ENCODE measurements at regions of chr20 and their contacts with region 1.

Region 1: GRCh38 chr20:33666293-33667244 is at the start of gene ACTL10:
- DNase-seq: peak; percentile 65 to 85 (median 66)
- H3K4me3 ChIP-seq: peak within 1 kb of the TSS; percentile 47 to 52
- H3K4me3 Mint-ChIP-seq: peak within 1 kb of the TSS; percentile 95 to 98 (median 97)
- H3K27ac ChIP-seq: peak within 1 kb of the TSS; percentile 60
- H3K27ac Mint-ChIP-seq: peak within 1 kb of the TSS; percentile 95 to 99 (median 97)
- H3K4me1 ChIP-seq: peaks cover 41% of the 10 kb centered on the region
- H3K4me1 Mint-ChIP-seq: peaks cover 20 to 71% (median 36%) of the 10 kb centered on the region in 4 donors
- H3K27me3 ChIP-seq: no peaks in the 10 kb centered on the region
- H3K27me3 Mint-ChIP-seq: no peaks in the 10 kb centered on the region
- total RNA-seq, gene ACTL10: 5.5 to 6.0 TPM

Region 2: GRCh38 chr20:33450867-33451266 is 215.7 kb before region 1 on chr20:
- CTCF ChIA-PET with region 1: interaction called, 54 read pairs
- POLR2A ChIA-PET with region 1: interaction called, 22 read pairs
- intact Hi-C with region 1: no loop called
- DNase-seq: no peak
- H3K4me3 ChIP-seq: no peak overlapping the region
- H3K4me3 Mint-ChIP-seq: no peak overlapping the region
- H3K27ac ChIP-seq: no peak overlapping the region
- H3K27ac Mint-ChIP-seq: no peak overlapping the region
- H3K4me1 ChIP-seq: no peaks in the 10 kb centered on the region
- H3K4me1 Mint-ChIP-seq: peaks cover 0 to 5% (median 2%) of the 10 kb centered on the region in 4 donors
- H3K27me3 ChIP-seq: no peaks in the 10 kb centered on the region
- H3K27me3 Mint-ChIP-seq: no peaks in the 10 kb centered on the region

Region 3: GRCh38 chr20:33554914-33555420 is 111.6 kb before region 1 on chr20:
- CTCF ChIA-PET with region 1: interaction called, 7 read pairs
- POLR2A ChIA-PET with region 1: interaction called, 11 read pairs
- intact Hi-C with region 1: loop called (anchors 2 kb)
- DNase-seq: peak; percentile 77 to 94 (median 91)
- H3K4me3 ChIP-seq: no peak overlapping the region
- H3K4me3 Mint-ChIP-seq: peak overlapping the region; percentile 57 to 82 (median 71)
- H3K27ac ChIP-seq: peak overlapping the region; percentile 76
- H3K27ac Mint-ChIP-seq: peak overlapping the region; percentile 91 to 99 (median 97)
- H3K4me1 ChIP-seq: peaks cover 20% of the 10 kb centered on the region
- H3K4me1 Mint-ChIP-seq: peaks cover 14 to 41% (median 24%) of the 10 kb centered on the region in 4 donors
- H3K27me3 ChIP-seq: no peaks in the 10 kb centered on the region
- H3K27me3 Mint-ChIP-seq: no peaks in the 10 kb centered on the region

Region 4: GRCh38 chr20:33679758-33680485 is 13.4 kb after region 1 on chr20:
- CTCF ChIA-PET with region 1: interaction called, 88 read pairs
- POLR2A ChIA-PET with region 1: interaction called, 122 read pairs
- intact Hi-C with region 1: no loop called
- DNase-seq: peak; percentile 22 to 73 (median 36)
- H3K4me3 ChIP-seq: no peak overlapping the region
- H3K4me3 Mint-ChIP-seq: peak overlapping the region in 7 of 8 donors; percentile 3 to 79 (median 71)
- H3K27ac ChIP-seq: no peak overlapping the region
- H3K27ac Mint-ChIP-seq: peak overlapping the region; percentile 58 to 93 (median 90)
- H3K4me1 ChIP-seq: peaks cover 47% of the 10 kb centered on the region
- H3K4me1 Mint-ChIP-seq: peaks cover 24 to 61% (median 43%) of the 10 kb centered on the region in 4 donors
- H3K27me3 ChIP-seq: no peaks in the 10 kb centered on the region
- H3K27me3 Mint-ChIP-seq: no peaks in the 10 kb centered on the region

Region 5: DNA sequence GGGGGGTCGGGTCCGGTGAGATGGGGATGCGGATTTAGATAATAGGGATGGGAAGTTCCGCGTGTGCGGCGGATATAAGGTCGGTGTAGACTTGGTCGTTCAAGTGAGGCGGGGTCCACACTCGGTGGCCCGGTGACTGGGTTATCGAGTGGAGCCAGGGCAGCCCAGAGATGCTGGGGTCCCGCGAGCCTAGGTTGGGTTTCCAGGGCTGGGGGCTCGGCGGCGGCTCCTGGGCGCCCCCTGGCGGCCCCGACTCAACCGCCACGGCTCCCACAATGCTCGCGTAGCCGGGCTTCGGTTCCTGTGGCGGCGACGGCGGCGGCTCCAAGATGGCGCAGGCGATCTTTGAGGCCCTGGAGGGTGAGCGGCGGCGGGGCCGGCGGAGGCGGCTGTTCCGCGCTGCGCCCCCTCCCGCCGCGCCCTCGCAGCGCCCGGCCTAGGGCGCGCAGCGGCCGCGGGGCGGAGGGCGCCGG is 65.2 kb after region 1 on chr20 and contains the start of gene ZNF341:
- CTCF ChIA-PET with region 1: interaction called, 3 read pairs
- POLR2A ChIA-PET with region 1: interaction called, 31 read pairs
- intact Hi-C with region 1: loop called (anchors 2 kb)
- DNase-seq: peak in 4 of 5 donors; percentile 88 to 91 (median 90)
- H3K4me3 ChIP-seq: peak within 1 kb of the TSS; percentile 64 to 69
- H3K4me3 Mint-ChIP-seq: peak within 1 kb of the TSS; percentile 89 to 94 (median 93)
- H3K27ac ChIP-seq: peak within 1 kb of the TSS; percentile 64
- H3K27ac Mint-ChIP-seq: peak within 1 kb of the TSS; percentile 92 to 98 (median 96)
- H3K4me1 ChIP-seq: peaks cover 21% of the 10 kb centered on the region
- H3K4me1 Mint-ChIP-seq: peaks cover 10 to 25% (median 19%) of the 10 kb centered on the region in 4 donors
- H3K27me3 ChIP-seq: no peaks in the 10 kb centered on the region
- H3K27me3 Mint-ChIP-seq: no peaks in the 10 kb centered on the region
- total RNA-seq, gene ZNF341: 4.8 to 5.0 TPM